ENCODE measurements at regions of chr11 and their contacts with region 1.

Region 1: GRCh38 chr11:34366522-34366921 is 8.7 kb upstream of the ABTB2 start:
- DNase-seq: peak in 3 of 6 donors; percentile 20 to 44 (median 24)
- ATAC-seq: peak in 2 of 4 donors; percentile 59 to 61
- H3K4me3 ChIP-seq: no peak overlapping the region
- H3K27ac ChIP-seq: no peak overlapping the region
- H3K4me1 ChIP-seq: no peaks in the 10 kb centered on the region
- H3K27me3 ChIP-seq: no peaks in the 10 kb centered on the region
- CTCF ChIP-seq: peak in 2 of 4 donors; percentile 26 to 41

Region 2: GRCh38 chr11:33996498-33997454 is 369.7 kb before region 1 on chr11:
- intact Hi-C with region 1: loop called in 1 of 3 experiments (anchors 10 kb)
- DNase-seq: peak; percentile 52 to 83 (median 64)
- ATAC-seq: peak; percentile 97 to 100 (median 100)
- H3K4me3 ChIP-seq: no peak overlapping the region
- H3K27ac ChIP-seq: no peak overlapping the region
- H3K4me1 ChIP-seq: no peaks in the 10 kb centered on the region
- H3K27me3 ChIP-seq: no peaks in the 10 kb centered on the region
- CTCF ChIP-seq: peak; percentile 47 to 75 (median 70)

Region 3: GRCh38 chr11:34174412-34175041 is 192.0 kb before region 1 on chr11:
- intact Hi-C with region 1: loop called in 2 of 3 experiments (anchors 5 to 10 kb)
- DNase-seq: peak; percentile 65 to 93 (median 80)
- ATAC-seq: peak; percentile 99 to 100 (median 100)
- H3K4me3 ChIP-seq: peak overlapping the region in 2 of 4 donors; percentile 10 to 32
- H3K27ac ChIP-seq: no peak overlapping the region
- H3K4me1 ChIP-seq: no peaks in the 10 kb centered on the region
- H3K27me3 ChIP-seq: no peaks in the 10 kb centered on the region
- CTCF ChIP-seq: peak; percentile 74 to 90 (median 86)

Region 4: DNA sequence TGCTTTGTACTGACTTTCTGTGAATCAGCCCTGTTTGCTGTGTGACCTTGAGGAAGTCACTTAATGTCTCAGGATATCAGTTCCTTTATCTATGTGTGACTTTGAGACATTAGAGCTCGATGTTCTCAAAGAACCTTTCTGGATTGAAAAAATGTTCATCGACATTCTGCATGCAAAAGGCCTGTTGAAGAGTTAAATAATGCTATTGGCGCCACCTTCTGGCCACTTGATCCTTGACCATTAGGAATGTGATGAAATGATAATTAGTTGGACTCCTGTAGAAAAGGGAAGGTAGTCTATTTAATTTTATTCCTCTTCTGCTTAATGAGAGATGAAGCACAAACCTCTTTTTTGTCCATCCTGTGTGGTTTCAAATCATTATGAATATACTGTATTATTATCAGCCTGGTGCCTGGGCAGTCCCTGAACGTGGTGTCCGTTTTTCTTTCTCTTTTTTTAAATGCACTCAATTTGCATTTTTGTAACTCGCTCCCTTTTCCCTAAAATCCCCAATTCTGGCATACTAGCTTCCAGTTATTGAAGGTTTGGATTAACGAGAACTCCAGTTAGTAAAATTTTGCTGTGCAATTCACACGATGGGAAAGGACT is 126.4 kb after region 1 on chr11:
- intact Hi-C with region 1: loop called (anchors 5 to 10 kb)
- DNase-seq: peak in 5 of 6 donors; percentile 34 to 73 (median 54)
- ATAC-seq: peak; percentile 55 to 81 (median 80)
- H3K4me3 ChIP-seq: no peak overlapping the region
- H3K27ac ChIP-seq: no peak overlapping the region
- H3K4me1 ChIP-seq: no peaks in the 10 kb centered on the region
- H3K27me3 ChIP-seq: no peaks in the 10 kb centered on the region
- CTCF ChIP-seq: peak; percentile 17 to 60 (median 44)

Region 5: DNA sequence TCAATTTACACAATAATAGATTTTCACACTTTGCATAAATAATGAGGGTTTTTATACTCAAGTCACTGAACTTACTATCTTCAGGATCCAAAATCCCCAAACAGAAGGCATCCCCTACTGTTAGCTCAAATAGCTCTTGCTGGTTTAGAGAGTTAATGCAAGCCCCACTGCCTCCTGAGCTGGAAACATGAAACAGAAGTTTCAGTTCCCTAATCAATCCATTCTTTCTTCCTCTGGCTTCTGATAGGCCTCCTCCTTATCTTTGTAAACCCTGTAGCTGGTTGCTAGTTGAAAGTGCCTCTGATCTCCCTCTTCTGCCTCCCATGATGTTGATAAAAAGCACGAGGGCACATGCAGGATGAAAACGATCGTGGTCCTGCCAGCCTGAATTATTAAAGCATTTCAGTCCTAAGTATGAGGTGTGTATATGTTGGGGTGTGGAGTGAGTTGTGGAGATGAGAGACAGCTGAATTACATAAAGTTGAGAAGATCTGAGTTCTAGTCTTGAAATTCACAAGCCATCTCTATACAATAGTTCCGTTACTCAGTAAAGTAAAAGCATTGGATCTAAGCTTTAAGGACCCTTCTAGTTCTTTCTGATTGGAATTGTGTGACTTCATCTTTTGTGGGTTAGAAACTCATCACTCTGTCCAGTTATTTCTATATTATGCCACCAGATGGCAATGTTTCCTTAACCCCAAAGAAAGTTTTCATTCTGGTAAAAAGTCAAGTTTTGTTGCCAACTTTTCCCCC is 219.4 kb after region 1 on chr11:
- intact Hi-C with region 1: no loop called
- DNase-seq: no peak
- ATAC-seq: peak; percentile 62 to 83 (median 75)
- H3K4me3 ChIP-seq: no peak overlapping the region
- H3K27ac ChIP-seq: peak overlapping the region in 2 of 4 donors; percentile 48 to 52
- H3K4me1 ChIP-seq: peaks cover 6 to 18% (median 7%) of the 10 kb centered on the region in 3 donors
- H3K27me3 ChIP-seq: no peaks in the 10 kb centered on the region
- CTCF ChIP-seq: peak; percentile 29 to 62 (median 52)